Stomach (tissue), 19 donors: ENCODE measurements at regions of chr2 and their contacts with region 1.

Region 1: DNA sequence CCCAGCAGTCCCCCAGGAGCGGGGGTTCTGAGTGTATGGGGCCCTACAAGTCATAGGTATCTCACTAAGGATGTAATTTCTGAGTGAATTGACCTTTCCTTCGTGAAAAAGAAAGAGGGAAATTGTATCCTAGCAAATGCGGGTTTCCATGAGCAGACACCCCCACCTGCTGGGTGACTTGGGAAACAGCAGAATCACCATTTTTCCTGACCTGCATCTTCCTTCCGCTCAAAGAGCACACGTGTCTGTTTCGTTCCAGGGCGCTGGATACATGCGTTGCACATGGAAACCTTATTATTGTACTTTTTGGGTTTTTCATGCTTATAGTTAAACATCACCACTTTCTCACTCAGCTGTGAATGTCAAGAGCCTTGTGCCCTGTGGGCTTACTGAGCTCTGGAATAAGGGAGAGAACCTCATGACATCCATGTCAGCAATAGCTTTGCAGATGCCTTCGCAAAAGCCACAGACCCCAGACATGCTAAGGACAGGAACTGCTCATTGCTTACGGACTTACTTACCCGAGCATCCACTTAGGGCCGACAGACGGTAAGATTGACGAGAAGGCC is 132.8 kb downstream of the TPO start:
- DNase-seq: peak in 1 of 2 donors; percentile 79
- H3K4me3 ChIP-seq: no peak overlapping the region
- H3K27ac ChIP-seq: no peak overlapping the region
- H3K4me1 ChIP-seq: peaks cover 0 to 22% (median 10%) of the 10 kb centered on the region in 4 donors
- H3K27me3 ChIP-seq: peaks cover 0 to 28% (median 7%) of the 10 kb centered on the region in 3 donors
- CTCF ChIP-seq: peak in 5 of 7 experiments; percentile 61 to 77 (median 72)
- EP300 ChIP-seq: no peak
- POLR2A ChIP-seq: no peak

Region 2: GRCh38 chr2:714005-714741 is 831.9 kb before region 1 on chr2:
- intact Hi-C with region 1: loop called (anchors 10 kb)
- DNase-seq: peak; percentile 69 to 83
- H3K4me3 ChIP-seq: no peak overlapping the region
- H3K27ac ChIP-seq: no peak overlapping the region
- H3K4me1 ChIP-seq: peaks cover 0 to 6% (median 0%) of the 10 kb centered on the region in 4 donors
- H3K27me3 ChIP-seq: peaks cover 0 to 34% (median 6%) of the 10 kb centered on the region in 3 donors
- CTCF ChIP-seq: peak in 5 of 7 experiments; percentile 57 to 71 (median 62)
- EP300 ChIP-seq: no peak
- POLR2A ChIP-seq: no peak

Region 3: DNA sequence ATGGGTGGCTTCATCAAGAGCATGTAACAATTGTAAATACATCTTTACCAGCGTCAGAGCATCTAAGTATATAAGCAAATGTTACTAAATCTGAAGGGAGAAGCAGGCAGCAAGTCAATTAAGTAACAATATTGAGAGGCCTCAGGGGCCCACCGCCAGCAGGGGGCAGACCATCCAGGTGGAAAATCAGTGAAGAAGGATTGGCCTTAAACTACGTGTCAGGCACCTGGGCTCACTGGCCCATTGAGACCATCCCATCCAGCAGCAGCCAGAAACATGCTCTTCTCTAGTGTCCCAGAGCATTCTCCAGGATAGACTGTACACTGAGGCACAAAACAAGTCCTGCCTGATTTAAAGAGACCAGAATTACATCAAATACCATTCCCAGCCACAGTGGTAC is 691.6 kb before region 1 on chr2:
- intact Hi-C with region 1: loop called (anchors 10 kb)
- DNase-seq: peak; percentile 56 to 60
- H3K4me3 ChIP-seq: no peak overlapping the region
- H3K27ac ChIP-seq: no peak overlapping the region
- H3K4me1 ChIP-seq: no peaks in the 10 kb centered on the region
- H3K27me3 ChIP-seq: no peaks in the 10 kb centered on the region
- CTCF ChIP-seq: peak in 5 of 7 experiments; percentile 31 to 61 (median 40)
- EP300 ChIP-seq: no peak
- POLR2A ChIP-seq: no peak

Region 4: GRCh38 chr2:2229626-2230432 is 683.7 kb after region 1 on chr2:
- intact Hi-C with region 1: no loop called
- DNase-seq: peak in 1 of 2 donors; percentile 12
- H3K4me3 ChIP-seq: no peak overlapping the region
- H3K27ac ChIP-seq: no peak overlapping the region
- H3K4me1 ChIP-seq: peaks cover 0 to 4% (median 0%) of the 10 kb centered on the region in 4 donors
- H3K27me3 ChIP-seq: no peaks in the 10 kb centered on the region
- CTCF ChIP-seq: no peak
- EP300 ChIP-seq: no peak
- POLR2A ChIP-seq: no peak